OCI-LY7 (cell line): ENCODE measurements at regions of chr13 and their contacts with region 1.

Region 1: GRCh38 chr13:76473552-76474134 is 412.6 kb downstream of the KCTD12 start:
- DNase-seq: peak; percentile 77
- H3K4me3 ChIP-seq: no peak overlapping the region
- H3K27ac ChIP-seq: no peak overlapping the region
- H3K4me1 ChIP-seq: no peaks in the 10 kb centered on the region
- CTCF ChIP-seq: peak; percentile 94

Region 2: GRCh38 chr13:75696746-75697145 is 776.9 kb before region 1 on chr13:
- CTCF ChIA-PET with region 1: no interaction called
- POLR2A ChIA-PET with region 1: no interaction called
- intact Hi-C with region 1: loop called (anchors 2 kb)
- DNase-seq: no peak
- H3K4me3 ChIP-seq: no peak overlapping the region
- H3K27ac ChIP-seq: no peak overlapping the region
- H3K4me1 ChIP-seq: no peaks in the 10 kb centered on the region
- CTCF ChIP-seq: no peak

Region 3: GRCh38 chr13:76223565-76223964 is 250.1 kb before region 1 on chr13:
- CTCF ChIA-PET with region 1: no interaction called
- POLR2A ChIA-PET with region 1: no interaction called
- intact Hi-C with region 1: no loop called
- DNase-seq: no peak
- H3K4me3 ChIP-seq: no peak overlapping the region
- H3K27ac ChIP-seq: no peak overlapping the region
- H3K4me1 ChIP-seq: no peaks in the 10 kb centered on the region
- CTCF ChIP-seq: 0 out of 2 replicates have a peak, but pooled peaks have one; percentile 11